ENCODE measurements at regions of chr13 and their contacts with region 1.

Region 1: GRCh38 chr13:41310963-41311606 is at the start of gene NAA16:
- DNase-seq: peak; percentile 97
- ATAC-seq: peak; percentile 85
- H3K4me3 Mint-ChIP-seq: peak within 1 kb of the TSS; percentile 90
- H3K27ac Mint-ChIP-seq: peak within 1 kb of the TSS; percentile 96
- H3K4me1 Mint-ChIP-seq: peaks cover 39% of the 10 kb centered on the region
- H3K27me3 Mint-ChIP-seq: no peaks in the 10 kb centered on the region
- total RNA-seq, gene NAA16: 24.0 to 29.8 TPM

Region 2: GRCh38 chr13:40940841-40941240 is 370.2 kb before region 1 on chr13:
- CTCF ChIA-PET with region 1: no interaction called
- POLR2A ChIA-PET with region 1: no interaction called
- intact Hi-C with region 1: no loop called
- DNase-seq: no peak
- ATAC-seq: no peak
- H3K4me3 Mint-ChIP-seq: no peak overlapping the region
- H3K27ac Mint-ChIP-seq: no peak overlapping the region
- H3K4me1 Mint-ChIP-seq: peaks cover 13% of the 10 kb centered on the region
- H3K27me3 Mint-ChIP-seq: no peaks in the 10 kb centered on the region

Region 3: DNA sequence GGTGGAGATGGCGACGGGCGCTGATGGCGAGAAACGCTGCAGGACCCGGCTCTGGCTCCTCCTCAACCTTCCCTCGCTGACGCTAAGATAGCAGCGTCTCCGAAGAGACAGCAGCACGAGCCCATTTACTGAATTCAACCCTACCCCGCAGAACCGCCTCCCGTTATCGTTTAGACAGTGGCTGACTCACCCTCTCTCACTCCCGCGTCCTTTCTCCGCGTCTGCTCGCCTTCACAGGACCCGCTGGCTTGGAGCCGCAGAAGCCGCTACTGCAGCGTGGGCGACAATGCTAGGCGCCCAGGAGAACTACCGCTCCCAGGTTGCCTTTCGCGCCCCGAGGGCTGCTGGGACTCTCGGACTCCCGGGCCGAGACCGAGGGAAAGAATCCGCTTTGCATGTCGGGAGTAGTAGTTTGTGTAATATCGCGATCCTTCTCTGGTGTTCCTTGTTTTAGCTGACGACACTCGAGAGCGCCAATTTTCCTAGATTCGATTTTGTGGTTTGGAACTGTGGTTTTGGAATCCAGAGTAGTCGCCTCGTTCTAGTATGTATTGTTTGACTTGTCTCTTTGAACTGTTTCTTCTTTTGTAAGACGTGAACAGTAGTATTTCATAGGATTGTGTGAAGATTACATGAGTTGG is 178.5 kb before region 1 on chr13 and contains the start of gene KBTBD6:
- CTCF ChIA-PET with region 1: no interaction called
- POLR2A ChIA-PET with region 1: no interaction called
- intact Hi-C with region 1: loop called (anchors 1 to 2 kb)
- DNase-seq: peak; percentile 98
- ATAC-seq: peak; percentile 95
- H3K4me3 Mint-ChIP-seq: peak within 1 kb of the TSS; percentile 92
- H3K27ac Mint-ChIP-seq: peak within 1 kb of the TSS; percentile 93
- H3K4me1 Mint-ChIP-seq: peaks cover 46% of the 10 kb centered on the region
- H3K27me3 Mint-ChIP-seq: no peaks in the 10 kb centered on the region
- total RNA-seq, gene KBTBD6: 3.4 to 4.4 TPM

Region 4: GRCh38 chr13:41263261-41264027 is 47.6 kb before region 1 on chr13 and contains the start of gene MTRF1:
- CTCF ChIA-PET with region 1: no interaction called
- POLR2A ChIA-PET with region 1: no interaction called
- intact Hi-C with region 1: loop called (anchors 1 kb)
- DNase-seq: peak; percentile 89
- ATAC-seq: peak; percentile 93
- H3K4me3 Mint-ChIP-seq: peak within 1 kb of the TSS; percentile 80
- H3K27ac Mint-ChIP-seq: peak within 1 kb of the TSS; percentile 95
- H3K4me1 Mint-ChIP-seq: peaks cover 12% of the 10 kb centered on the region
- H3K27me3 Mint-ChIP-seq: no peaks in the 10 kb centered on the region
- total RNA-seq, gene MTRF1: 19.7 to 22.1 TPM

Region 5: GRCh38 chr13:41352935-41353840 is 42.1 kb after region 1 on chr13:
- CTCF ChIA-PET with region 1: no interaction called
- POLR2A ChIA-PET with region 1: no interaction called
- intact Hi-C with region 1: loop called in 1 of 2 experiments (anchors 1 kb)
- DNase-seq: peak; percentile 55
- ATAC-seq: peak; percentile 54
- H3K4me3 Mint-ChIP-seq: no peak overlapping the region
- H3K27ac Mint-ChIP-seq: peak overlapping the region; percentile 78
- H3K4me1 Mint-ChIP-seq: peaks cover 55% of the 10 kb centered on the region
- H3K27me3 Mint-ChIP-seq: no peaks in the 10 kb centered on the region

Region 6: GRCh38 chr13:41465241-41465847 is 154.3 kb after region 1 on chr13:
- CTCF ChIA-PET with region 1: no interaction called
- POLR2A ChIA-PET with region 1: no interaction called
- intact Hi-C with region 1: loop called in 1 of 2 experiments (anchors 1 kb)
- DNase-seq: peak; percentile 95
- ATAC-seq: peak; percentile 84
- H3K4me3 Mint-ChIP-seq: peak overlapping the region; percentile 82
- H3K27ac Mint-ChIP-seq: peak overlapping the region; percentile 98
- H3K4me1 Mint-ChIP-seq: peaks cover 91% of the 10 kb centered on the region
- H3K27me3 Mint-ChIP-seq: no peaks in the 10 kb centered on the region

Region 7: GRCh38 chr13:41767801-41768200 is 456.7 kb after region 1 on chr13:
- CTCF ChIA-PET with region 1: no interaction called
- POLR2A ChIA-PET with region 1: no interaction called
- intact Hi-C with region 1: no loop called
- DNase-seq: no peak
- ATAC-seq: no peak
- H3K4me3 Mint-ChIP-seq: no peak overlapping the region
- H3K27ac Mint-ChIP-seq: no peak overlapping the region
- H3K4me1 Mint-ChIP-seq: peaks cover 23% of the 10 kb centered on the region
- H3K27me3 Mint-ChIP-seq: no peaks in the 10 kb centered on the region

Region 8: GRCh38 chr13:42039946-42040729 is 729.1 kb after region 1 on chr13:
- CTCF ChIA-PET with region 1: no interaction called
- POLR2A ChIA-PET with region 1: no interaction called
- intact Hi-C with region 1: loop called in 1 of 2 experiments (anchors 2 kb)
- DNase-seq: peak; percentile 92
- ATAC-seq: peak; percentile 77
- H3K4me3 Mint-ChIP-seq: peak overlapping the region; percentile 74
- H3K27ac Mint-ChIP-seq: peak overlapping the region; percentile 76
- H3K4me1 Mint-ChIP-seq: peaks cover 23% of the 10 kb centered on the region
- H3K27me3 Mint-ChIP-seq: peaks cover 5% of the 10 kb centered on the region